HEK293T (cell line): ENCODE measurements at regions of chr5 and their contacts with region 1.

Region 1: DNA sequence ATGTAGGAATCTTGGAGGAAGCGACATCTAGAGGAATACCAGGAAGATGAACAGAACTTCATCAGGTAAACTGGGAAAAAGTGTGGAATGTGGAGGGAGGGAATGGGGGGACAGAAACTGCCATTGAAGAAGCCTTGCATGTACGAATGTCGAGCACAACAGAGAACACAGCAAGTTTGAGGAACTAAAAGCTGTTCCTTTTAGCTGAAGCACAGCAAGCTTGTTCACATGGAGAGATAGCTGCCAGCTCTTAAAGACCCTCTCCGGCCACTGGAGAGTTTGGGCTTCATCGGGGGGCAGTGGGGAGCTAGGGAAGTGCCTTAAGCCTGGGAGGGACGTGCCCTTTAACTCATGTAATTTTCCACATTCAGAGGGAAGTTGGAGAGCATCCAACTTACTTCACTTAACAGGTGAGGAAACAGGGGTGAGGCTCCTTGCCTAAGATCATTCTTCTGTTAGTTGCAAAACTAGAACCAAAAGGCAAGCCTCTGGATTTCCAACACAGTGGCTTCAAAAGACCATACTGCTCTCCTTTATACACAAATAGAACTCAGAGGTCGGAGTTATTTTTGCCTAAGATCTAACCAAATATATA is 2.3 kb upstream of the CYFIP2 start:
- DNase-seq: no peak

Region 2: GRCh38 chr5:157253547-157253946 is 10.0 kb before region 1 on chr5:
- CTCF ChIA-PET with region 1: interaction called, 16 read pairs
- POLR2A ChIA-PET with region 1: no interaction called
- DNase-seq: peak; percentile 72

Region 3: GRCh38 chr5:157283434-157283833 is 19.8 kb after region 1 on chr5:
- CTCF ChIA-PET with region 1: no interaction called
- POLR2A ChIA-PET with region 1: no interaction called
- DNase-seq: no peak